Dorsolateral prefrontal cortex (tissue), 120 donors: ENCODE measurements at regions of chr20 and their contacts with region 1.

Region 1: DNA sequence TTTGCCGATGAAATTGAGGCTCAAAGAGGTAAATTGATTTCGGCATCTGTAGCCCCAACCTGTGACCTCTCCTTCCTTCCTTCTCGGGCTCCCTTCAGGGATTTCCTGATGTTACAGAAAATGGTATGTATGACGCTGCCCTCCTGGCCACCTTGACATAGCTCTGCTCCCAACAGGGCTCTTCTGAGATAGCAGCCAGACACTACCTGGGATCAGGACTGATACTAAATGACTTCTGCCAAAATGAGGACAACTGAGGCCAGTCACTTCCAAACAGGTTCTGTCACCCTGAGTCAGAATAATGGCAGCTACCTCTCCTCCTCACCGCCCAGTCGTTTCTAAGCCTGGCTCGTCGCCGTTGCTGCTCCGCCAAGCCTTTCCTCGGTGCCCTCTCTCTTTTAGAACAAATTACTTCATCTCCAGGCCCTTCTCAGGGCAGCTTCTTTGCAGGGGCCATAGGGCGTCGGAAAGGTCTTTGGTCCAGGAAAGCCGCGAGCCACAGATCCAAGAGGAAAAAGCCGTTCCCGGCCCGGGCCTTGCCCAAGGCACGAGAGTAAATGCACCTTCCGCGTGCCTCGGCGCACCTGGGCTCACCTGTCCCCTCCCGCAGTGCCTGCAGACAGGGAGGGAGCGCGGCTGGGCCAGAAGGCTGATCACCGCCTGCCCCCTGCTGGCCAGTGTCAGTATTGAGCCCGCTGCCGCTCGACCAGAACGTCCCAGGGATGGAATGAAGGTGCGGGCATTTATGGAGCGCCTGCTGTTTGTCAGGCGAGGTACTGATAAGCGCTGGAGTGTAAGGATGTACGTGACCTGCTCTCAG is 904 bp upstream of the LPIN3 start:
- DNase-seq: peak in 9 of 10 donors; percentile 77 to 88 (median 82)
- H3K4me3 ChIP-seq: peak overlapping the region; percentile 12 to 65 (median 46)
- H3K27ac ChIP-seq: peak overlapping the region in 29 of 59 donors; percentile 0 to 73 (median 45)
- H3K27me3 ChIP-seq: no peaks in the 10 kb centered on the region
- CTCF ChIP-seq: peak; percentile 96 to 100 (median 99)

Region 2: DNA sequence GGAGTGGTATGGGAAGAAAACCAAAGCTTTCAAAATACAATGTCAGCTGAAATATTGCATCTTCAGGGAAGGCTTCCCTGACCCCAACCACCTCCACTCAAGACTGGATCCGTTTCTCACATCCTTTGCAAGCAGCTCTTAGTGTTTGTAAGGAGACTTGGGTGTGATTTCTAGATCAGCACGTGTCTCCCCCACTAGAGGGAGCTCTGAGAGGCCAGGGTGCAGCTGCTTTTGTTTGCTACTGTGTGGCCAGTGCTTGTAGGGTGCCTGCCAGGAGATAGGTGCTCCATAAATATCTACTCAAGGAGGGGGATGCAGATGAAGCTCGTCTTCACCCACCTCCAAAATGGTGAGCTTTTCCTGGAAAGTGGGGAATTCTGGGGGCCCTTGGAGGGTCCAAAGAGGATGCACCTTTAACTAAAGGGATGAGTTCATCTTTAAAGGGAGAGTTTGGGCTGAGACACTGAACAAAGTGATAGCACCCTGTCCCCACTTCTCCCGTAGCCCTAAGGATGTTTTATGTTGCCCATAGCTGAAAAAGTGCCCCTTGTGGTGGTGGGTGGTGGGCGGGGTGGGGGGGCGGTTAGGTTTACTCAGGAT is 598.1 kb before region 1 on chr20:
- intact Hi-C with region 1: no loop called
- DNase-seq: peak in 1 of 10 donors; percentile 25
- H3K4me3 ChIP-seq: no peak overlapping the region
- H3K27ac ChIP-seq: no peak overlapping the region
- H3K27me3 ChIP-seq: peaks cover 0 to 34% (median 7%) of the 10 kb centered on the region in 45 donors
- CTCF ChIP-seq: peak in 53 of 56 donors; percentile 13 to 68 (median 52)

Region 3: DNA sequence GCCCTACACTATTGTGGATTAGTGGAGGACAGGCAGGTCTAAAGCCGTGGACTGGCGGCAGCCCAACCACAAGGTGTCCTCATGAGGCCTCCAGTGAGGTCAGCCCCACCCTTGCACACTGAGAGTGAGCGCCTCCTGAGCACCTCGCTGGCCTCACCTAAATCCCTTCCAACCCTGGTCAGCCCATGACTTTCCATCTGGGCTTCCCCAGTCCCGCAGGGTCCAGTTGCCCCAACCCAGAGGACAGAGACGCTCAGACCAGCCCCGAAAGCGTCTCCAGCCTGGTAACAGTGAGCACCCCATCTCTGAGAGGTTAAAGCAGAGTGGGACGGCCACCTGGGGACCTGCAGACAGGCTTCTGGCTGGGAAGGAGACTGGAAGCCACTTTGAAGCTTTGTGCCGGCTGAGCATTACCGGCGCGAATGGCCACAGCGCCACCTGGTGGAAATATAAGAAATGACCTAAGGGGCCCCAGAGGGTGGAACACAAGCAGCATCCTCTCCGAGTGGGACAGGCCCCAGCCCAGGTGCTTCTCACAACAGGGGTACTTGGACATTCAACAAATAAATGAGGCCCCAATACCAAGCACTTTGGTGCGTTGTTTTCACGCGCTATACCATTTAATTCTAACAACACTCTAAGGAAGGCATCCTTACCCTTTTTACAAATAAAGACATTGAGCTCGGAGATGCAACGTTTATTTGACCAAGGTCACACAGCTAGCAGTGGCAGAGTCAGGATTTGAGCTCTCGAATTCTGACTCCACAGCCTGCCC is 376.8 kb before region 1 on chr20:
- intact Hi-C with region 1: loop called in 1 of 2 experiments (anchors 5 kb)
- DNase-seq: peak; percentile 55 to 84 (median 66)
- H3K4me3 ChIP-seq: peak overlapping the region in 1 of 59 donors; percentile 16
- H3K27ac ChIP-seq: no peak overlapping the region
- H3K27me3 ChIP-seq: no peaks in the 10 kb centered on the region
- CTCF ChIP-seq: peak; percentile 83 to 97 (median 94)

Region 4: DNA sequence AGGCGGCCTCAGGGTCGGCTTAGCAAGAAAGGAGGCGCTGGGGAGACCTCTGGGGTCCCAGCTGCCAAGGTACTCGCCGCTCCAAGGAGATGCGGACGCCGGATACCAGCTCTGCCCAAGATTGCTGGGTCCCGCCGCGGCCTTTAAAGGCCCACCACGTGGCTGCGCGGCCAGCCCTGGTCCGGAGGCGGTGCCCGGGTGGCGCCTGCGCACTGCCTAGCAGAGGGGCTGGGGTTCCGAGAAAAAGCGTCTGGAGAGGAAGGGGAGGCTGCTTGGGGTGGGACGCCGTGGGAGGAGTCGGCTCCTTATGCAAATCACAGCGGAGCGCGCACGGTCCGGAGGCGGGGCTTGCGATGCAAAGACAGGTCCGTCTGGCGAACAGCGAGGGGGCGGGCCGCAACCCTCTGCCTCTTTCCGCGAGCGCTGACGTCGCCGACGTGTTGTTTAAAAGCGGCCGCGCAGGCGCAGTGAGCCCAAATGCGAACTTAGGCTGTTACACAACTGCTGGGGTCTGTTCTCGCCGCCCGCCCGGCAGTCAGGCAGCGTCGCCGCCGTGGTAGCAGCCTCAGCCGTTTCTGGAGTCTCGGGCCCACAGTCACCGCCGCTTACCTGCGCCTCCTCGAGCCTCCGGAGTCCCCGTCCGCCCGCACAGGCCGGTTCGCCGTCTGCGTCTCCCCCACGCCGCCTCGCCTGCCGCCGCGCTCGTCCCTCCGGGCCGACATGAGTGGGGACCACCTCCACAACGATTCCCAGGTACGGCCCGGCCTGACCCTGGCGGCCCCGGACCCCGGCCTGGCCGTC is 311.2 kb before region 1 on chr20 and contains the start of gene TOP1:
- intact Hi-C with region 1: loop called in 1 of 2 experiments (anchors 5 kb)
- DNase-seq: peak; percentile 100
- H3K4me3 ChIP-seq: peak within 1 kb of the TSS; percentile 55 to 100 (median 95)
- H3K27ac ChIP-seq: peak within 1 kb of the TSS; percentile 51 to 99 (median 92)
- H3K27me3 ChIP-seq: no peaks in the 10 kb centered on the region
- CTCF ChIP-seq: peak in 39 of 56 donors; percentile 10 to 65 (median 29)
- total RNA-seq, gene TOP1: 26.8 to 49.2 (median 37.1) TPM

Region 5: GRCh38 chr20:41232973-41233926 is 106.5 kb before region 1 on chr20:
- intact Hi-C with region 1: loop called in 1 of 2 experiments (anchors 5 kb)
- DNase-seq: no peak
- H3K4me3 ChIP-seq: peak overlapping the region in 8 of 59 donors; percentile 5 to 39 (median 17)
- H3K27ac ChIP-seq: peak overlapping the region; percentile 73 to 97 (median 94)
- H3K27me3 ChIP-seq: no peaks in the 10 kb centered on the region
- CTCF ChIP-seq: no peak

Region 6: GRCh38 chr20:41249406-41250281 is 90.1 kb before region 1 on chr20:
- intact Hi-C with region 1: loop called in 1 of 2 experiments (anchors 5 kb)
- DNase-seq: peak in 9 of 10 donors; percentile 53 to 86 (median 72)
- H3K4me3 ChIP-seq: peak overlapping the region in 4 of 59 donors; percentile 8 to 14 (median 13)
- H3K27ac ChIP-seq: peak overlapping the region; percentile 80 to 99 (median 95)
- H3K27me3 ChIP-seq: no peaks in the 10 kb centered on the region
- CTCF ChIP-seq: peak in 51 of 56 donors; percentile 23 to 74 (median 50)